ENCODE measurements at regions of chr3 and their contacts with region 1.

Region 1: DNA sequence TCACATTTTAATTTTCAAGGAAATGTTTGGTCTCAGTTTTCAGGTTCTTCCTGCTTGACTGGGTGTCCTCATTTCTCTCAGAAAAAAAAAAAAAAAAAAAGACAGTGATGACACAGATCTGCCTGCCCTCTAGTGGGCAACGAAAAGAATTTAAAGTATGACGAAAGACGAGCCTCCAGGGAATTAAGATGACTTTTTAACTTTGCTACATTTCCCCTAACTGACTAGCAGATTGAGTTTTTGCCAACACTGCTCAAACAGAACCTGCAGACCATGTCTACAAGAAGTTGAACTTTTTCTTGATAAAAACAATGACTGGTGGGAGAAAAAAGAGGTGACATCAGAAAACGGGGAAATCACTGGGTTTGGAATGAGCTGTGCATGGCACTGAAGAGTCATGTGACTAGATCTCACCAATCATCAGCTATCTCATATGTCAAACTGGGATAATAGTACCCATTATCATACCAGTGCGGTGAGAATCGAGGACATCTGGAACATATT is 40.8 kb downstream of the EOMES start:
- DNase-seq: peak; percentile 79
- H3K4me3 ChIP-seq: peak overlapping the region; percentile 34
- H3K27ac ChIP-seq: no peak overlapping the region
- H3K4me1 ChIP-seq: no peaks in the 10 kb centered on the region
- CTCF ChIP-seq: peak; percentile 88

Region 2: GRCh38 chr3:27134165-27134796 is 547.0 kb before region 1 on chr3:
- CTCF ChIA-PET with region 1: no interaction called
- POLR2A ChIA-PET with region 1: no interaction called
- intact Hi-C with region 1: loop called (anchors 10 kb)
- DNase-seq: peak; percentile 62
- H3K4me3 ChIP-seq: no peak overlapping the region
- H3K27ac ChIP-seq: no peak overlapping the region
- H3K4me1 ChIP-seq: no peaks in the 10 kb centered on the region
- CTCF ChIP-seq: peak; percentile 87

Region 3: GRCh38 chr3:27312044-27312668 is 369.1 kb before region 1 on chr3:
- CTCF ChIA-PET with region 1: no interaction called
- POLR2A ChIA-PET with region 1: no interaction called
- intact Hi-C with region 1: loop called (anchors 2 kb)
- DNase-seq: peak; percentile 48
- H3K4me3 ChIP-seq: no peak overlapping the region
- H3K27ac ChIP-seq: no peak overlapping the region
- H3K4me1 ChIP-seq: no peaks in the 10 kb centered on the region
- CTCF ChIP-seq: peak; percentile 82

Region 4: GRCh38 chr3:27357665-27358258 is 323.5 kb before region 1 on chr3:
- CTCF ChIA-PET with region 1: no interaction called
- POLR2A ChIA-PET with region 1: no interaction called
- intact Hi-C with region 1: loop called (anchors 2 kb)
- DNase-seq: peak; percentile 64
- H3K4me3 ChIP-seq: no peak overlapping the region
- H3K27ac ChIP-seq: no peak overlapping the region
- H3K4me1 ChIP-seq: peaks cover 21% of the 10 kb centered on the region
- CTCF ChIP-seq: peak; percentile 86

Region 5: GRCh38 chr3:27880969-27881892 is 199.9 kb after region 1 on chr3:
- CTCF ChIA-PET with region 1: no interaction called
- POLR2A ChIA-PET with region 1: no interaction called
- intact Hi-C with region 1: no loop called
- DNase-seq: no peak
- H3K4me3 ChIP-seq: no peak overlapping the region
- H3K27ac ChIP-seq: no peak overlapping the region
- H3K4me1 ChIP-seq: no peaks in the 10 kb centered on the region
- CTCF ChIP-seq: no peak

Region 6: GRCh38 chr3:27943106-27943505 is 261.8 kb after region 1 on chr3:
- CTCF ChIA-PET with region 1: no interaction called
- POLR2A ChIA-PET with region 1: no interaction called
- intact Hi-C with region 1: no loop called
- DNase-seq: no peak
- H3K4me3 ChIP-seq: no peak overlapping the region
- H3K27ac ChIP-seq: no peak overlapping the region
- H3K4me1 ChIP-seq: no peaks in the 10 kb centered on the region
- CTCF ChIP-seq: 0 out of 2 replicates have a peak, but pooled peaks have one; percentile 27

Measured in OCI-LY7 (cell line).